ENCODE measurements at regions of chr1 and their contacts with region 1.

Region 1: GRCh38 chr1:146007506-146008133 is 11.2 kb upstream of the TXNIP start:
- DNase-seq: no peak
- ATAC-seq: no peak
- H3K4me3 ChIP-seq: no peak overlapping the region
- H3K27ac ChIP-seq: no peak overlapping the region
- H3K4me1 ChIP-seq: peaks cover 0 to 6% of the 10 kb centered on the region in 2 experiments; a peak in 2 of 4 replicates
- H3K27me3 ChIP-seq: no peaks in the 10 kb centered on the region
- CTCF ChIP-seq: no peak
- POLR2A ChIP-seq: no peak
- RAD21 ChIP-seq: no peak

Region 2: DNA sequence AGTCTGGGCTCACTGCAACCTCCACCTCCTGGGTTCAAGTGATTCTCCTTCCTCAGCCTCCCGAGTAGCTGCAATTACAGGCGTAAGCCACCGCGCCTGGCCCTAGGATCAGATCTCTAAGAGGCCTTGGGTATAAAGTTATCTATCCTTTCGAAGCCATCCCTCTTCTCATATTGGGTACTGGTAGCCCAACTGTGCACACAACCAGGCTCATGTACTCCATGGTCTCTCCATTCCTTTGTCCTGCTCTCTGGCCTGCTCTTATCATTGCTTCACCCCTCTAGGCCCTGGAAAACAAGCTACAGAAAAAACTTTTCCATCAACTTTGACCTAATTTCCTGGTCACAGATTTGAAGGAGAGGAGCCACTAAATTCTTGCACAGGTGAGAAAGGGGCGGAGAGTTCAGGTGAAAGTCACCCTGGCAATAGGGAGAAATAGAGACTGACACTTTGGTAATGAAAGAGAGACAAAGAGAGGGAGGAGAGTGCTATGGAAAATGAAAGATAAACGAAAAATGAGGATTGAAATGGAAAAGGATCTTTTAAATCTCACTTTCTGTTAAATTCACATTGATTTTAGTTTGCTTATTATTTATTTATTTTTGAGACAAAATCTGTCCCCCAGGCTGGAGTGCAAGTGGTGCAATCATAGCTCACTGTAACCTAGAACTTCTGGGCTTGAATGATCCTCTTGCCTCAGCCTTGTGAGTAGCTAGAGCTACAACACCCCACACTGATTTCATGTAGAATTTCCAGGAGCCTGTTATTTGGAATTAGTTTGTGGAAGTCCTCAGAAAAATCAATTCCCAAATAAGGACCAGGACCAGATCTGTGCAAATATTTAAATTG is 17.1 kb before region 1 on chr1:
- CTCF ChIA-PET with region 1: interaction called, 11 read pairs
- POLR2A ChIA-PET with region 1: no interaction called
- RAD21 ChIA-PET with region 1: no interaction called
- intact Hi-C with region 1: no loop called
- DNase-seq: no peak
- ATAC-seq: no peak
- H3K4me3 ChIP-seq: no peak overlapping the region
- H3K27ac ChIP-seq: no peak overlapping the region
- H3K4me1 ChIP-seq: peaks cover 12 to 18% of the 10 kb centered on the region in 2 experiments
- H3K27me3 ChIP-seq: no peaks in the 10 kb centered on the region
- CTCF ChIP-seq: no peak
- POLR2A ChIP-seq: no peak
- RAD21 ChIP-seq: no peak

Region 3: GRCh38 chr1:147287133-147287865 is 1279.7 kb after region 1 on chr1:
- CTCF ChIA-PET with region 1: no interaction called
- POLR2A ChIA-PET with region 1: no interaction called
- RAD21 ChIA-PET with region 1: no interaction called
- intact Hi-C with region 1: no loop called
- DNase-seq: no peak
- ATAC-seq: no peak
- H3K4me3 ChIP-seq: no peak overlapping the region
- H3K27ac ChIP-seq: no peak overlapping the region
- H3K4me1 ChIP-seq: no peaks in the 10 kb centered on the region
- H3K27me3 ChIP-seq: no peaks in the 10 kb centered on the region
- CTCF ChIP-seq: no peak
- POLR2A ChIP-seq: no peak
- RAD21 ChIP-seq: no peak

Measured in HCT116 (cell line).